Naive thymus-derived CD4-positive, alpha-beta T cell (primary cell): ENCODE measurements at regions of chr6 and their contacts with region 1.

Region 1: GRCh38 chr6:159008656-159009288 is 8.8 kb upstream of the RSPH3 start:
- DNase-seq: peak in 8 of 9 donors; percentile 7 to 64 (median 56)
- ATAC-seq: peak; percentile 79
- H3K4me3 ChIP-seq: no peak overlapping the region
- H3K4me3 Mint-ChIP-seq: peak overlapping the region in 1 of 10 donors; percentile 16
- H3K27ac ChIP-seq: no peak overlapping the region
- H3K27ac Mint-ChIP-seq: peak overlapping the region in 1 of 9 donors; percentile 60
- H3K4me1 ChIP-seq: peaks cover 14 to 22% of the 10 kb centered on the region in 2 donors
- H3K4me1 Mint-ChIP-seq: peaks cover 17 to 44% (median 27%) of the 10 kb centered on the region in 7 donors
- H3K27me3 ChIP-seq: no peaks in the 10 kb centered on the region
- H3K27me3 Mint-ChIP-seq: no peaks in the 10 kb centered on the region

Region 2: DNA sequence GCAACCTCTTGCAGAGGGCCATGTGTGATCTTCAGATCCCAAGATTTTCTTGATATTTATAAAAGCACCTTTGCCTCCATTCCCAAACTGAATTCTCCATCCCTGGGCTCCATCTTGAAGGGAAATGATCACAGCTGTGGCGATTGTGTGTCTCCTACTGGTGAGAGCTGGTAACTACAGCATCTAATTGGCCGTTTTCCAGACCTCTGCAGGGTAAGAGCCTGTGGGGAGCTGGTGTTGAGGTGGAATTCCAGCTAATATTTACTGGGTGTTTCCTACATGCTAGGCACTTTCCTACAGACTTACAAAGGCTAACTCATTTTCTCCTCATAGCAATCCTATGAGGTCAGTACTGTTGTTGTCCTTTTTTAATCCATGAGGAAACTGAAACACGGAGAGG is 101.2 kb after region 1 on chr6:
- CTCF ChIA-PET with region 1: interaction called, 220 read pairs
- POLR2A ChIA-PET with region 1: interaction called, 29 read pairs
- intact Hi-C with region 1: loop called in 1 of 2 experiments (anchors 1 kb)
- DNase-seq: peak in 5 of 9 donors; percentile 31 to 50 (median 34)
- ATAC-seq: no peak
- H3K4me3 ChIP-seq: no peak overlapping the region
- H3K4me3 Mint-ChIP-seq: peak overlapping the region in 2 of 10 donors; percentile 29 to 41
- H3K27ac ChIP-seq: no peak overlapping the region
- H3K27ac Mint-ChIP-seq: peak overlapping the region in 8 of 9 donors; percentile 50 to 92 (median 86)
- H3K4me1 ChIP-seq: peaks cover 59 to 62% of the 10 kb centered on the region in 2 donors
- H3K4me1 Mint-ChIP-seq: peaks cover 39 to 68% (median 58%) of the 10 kb centered on the region in 7 donors
- H3K27me3 ChIP-seq: no peaks in the 10 kb centered on the region
- H3K27me3 Mint-ChIP-seq: peaks cover 0 to 2% (median 0%) of the 10 kb centered on the region in 5 donors